GM12878 (cell line): ENCODE measurements at regions of chr5 and their contacts with region 1.

Region 1: GRCh38 chr5:119267958-119268386 is 87.8 kb upstream of the TNFAIP8 start:
- DNase-seq: peak; percentile 81
- ATAC-seq: peak; percentile 81
- H3K4me3 ChIP-seq: peak overlapping the region; percentile 99
- H3K27ac ChIP-seq: peak overlapping the region; percentile 90
- H3K4me1 ChIP-seq: peaks cover 13% of the 10 kb centered on the region
- H3K27me3 ChIP-seq: no peaks in the 10 kb centered on the region
- CTCF ChIP-seq: peak; percentile 63 to 80 (median 68)
- EP300 ChIP-seq: no peak
- POLR2A ChIP-seq: no peak
- RAD21 ChIP-seq: peak; percentile 46; the same call in 1 of the 2 replicates

Region 2: GRCh38 chr5:118529361-118530144 is 738.4 kb before region 1 on chr5:
- CTCF ChIA-PET with region 1: no interaction called
- POLR2A ChIA-PET with region 1: no interaction called
- RAD21 ChIA-PET with region 1: no interaction called
- SMC1A ChIA-PET with region 1: no interaction called
- in situ Hi-C with region 1: no loop called
- intact Hi-C with region 1: no loop called
- DNase-seq: no peak
- ATAC-seq: no peak
- H3K4me3 ChIP-seq: no peak overlapping the region
- H3K27ac ChIP-seq: no peak overlapping the region
- H3K4me1 ChIP-seq: no peaks in the 10 kb centered on the region
- H3K27me3 ChIP-seq: no peaks in the 10 kb centered on the region
- CTCF ChIP-seq: no peak
- EP300 ChIP-seq: no peak
- POLR2A ChIP-seq: no peak
- RAD21 ChIP-seq: no peak

Region 3: DNA sequence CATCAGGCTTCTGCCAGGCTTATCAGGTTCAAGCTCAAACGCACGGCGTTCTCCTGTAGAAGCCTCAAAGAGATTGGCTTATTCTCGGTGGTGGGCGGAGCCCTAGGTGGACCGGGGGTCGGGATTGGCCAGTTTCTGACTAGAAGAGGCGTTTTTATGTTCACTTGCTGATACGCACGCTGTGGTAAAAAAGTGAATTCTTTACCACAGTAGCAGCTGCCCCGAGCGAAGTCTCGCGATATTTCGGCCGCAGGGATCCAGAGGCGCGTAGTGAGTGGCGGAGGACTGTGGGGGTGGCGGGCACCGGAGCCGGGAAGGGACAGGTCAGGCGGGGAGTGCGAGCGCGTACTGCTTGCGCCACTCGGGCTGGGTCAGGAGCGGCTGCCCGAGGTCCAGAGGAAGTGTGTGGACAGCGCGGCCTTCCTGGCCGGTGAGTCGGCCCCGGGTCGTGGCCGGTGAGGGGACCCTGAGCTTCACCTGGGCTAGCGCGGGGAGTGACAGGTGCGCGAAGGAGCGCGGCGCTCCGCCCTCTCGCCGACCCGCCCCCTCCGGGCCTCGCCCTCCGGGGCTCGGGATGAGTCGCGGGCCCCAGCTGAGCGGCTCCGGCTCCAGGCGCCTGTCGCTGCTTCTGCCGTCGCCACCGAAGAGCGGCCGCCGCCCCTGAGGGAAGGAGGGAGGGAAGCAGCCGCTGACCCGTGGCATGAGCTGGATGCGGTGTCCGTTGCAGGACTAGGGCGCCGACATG is 197.0 kb before region 1 on chr5 and contains the start of gene DMXL1:
- CTCF ChIA-PET with region 1: interaction called, 3 read pairs
- POLR2A ChIA-PET with region 1: interaction called, 8 read pairs
- RAD21 ChIA-PET with region 1: interaction called, 4 read pairs
- SMC1A ChIA-PET with region 1: interaction called, 5 read pairs
- in situ Hi-C with region 1: no loop called
- intact Hi-C with region 1: loop called (anchors 2 kb)
- DNase-seq: peak; percentile 99
- ATAC-seq: peak; percentile 84
- H3K4me3 ChIP-seq: peak within 1 kb of the TSS; percentile 79
- H3K27ac ChIP-seq: peak within 1 kb of the TSS; percentile 91
- H3K4me1 ChIP-seq: peaks cover 5% of the 10 kb centered on the region
- H3K27me3 ChIP-seq: no peaks in the 10 kb centered on the region
- CTCF ChIP-seq: no peak
- EP300 ChIP-seq: 0 out of 4 replicates have a peak, but pooled peaks of 1 of the 2 experiments have one; percentile 8
- POLR2A ChIP-seq: peak; percentile 91
- RAD21 ChIP-seq: no peak
- polyA plus RNA-seq, gene DMXL1: 9.1 to 11.0 TPM

Region 4: GRCh38 chr5:119255571-119256356 is 12.2 kb before region 1 on chr5:
- CTCF ChIA-PET with region 1: interaction called, 9 read pairs
- POLR2A ChIA-PET with region 1: no interaction called
- RAD21 ChIA-PET with region 1: interaction called, 17 read pairs
- SMC1A ChIA-PET with region 1: interaction called, 6 read pairs
- in situ Hi-C with region 1: no loop called
- intact Hi-C with region 1: no loop called
- DNase-seq: no peak
- ATAC-seq: peak; percentile 84
- H3K4me3 ChIP-seq: no peak overlapping the region
- H3K27ac ChIP-seq: no peak overlapping the region
- H3K4me1 ChIP-seq: no peaks in the 10 kb centered on the region
- H3K27me3 ChIP-seq: no peaks in the 10 kb centered on the region
- CTCF ChIP-seq: peak in 2 of 3 experiments; percentile 30 to 31; a peak in 3 of 6 replicates
- EP300 ChIP-seq: no peak
- POLR2A ChIP-seq: no peak
- RAD21 ChIP-seq: peak; percentile 49

Region 5: DNA sequence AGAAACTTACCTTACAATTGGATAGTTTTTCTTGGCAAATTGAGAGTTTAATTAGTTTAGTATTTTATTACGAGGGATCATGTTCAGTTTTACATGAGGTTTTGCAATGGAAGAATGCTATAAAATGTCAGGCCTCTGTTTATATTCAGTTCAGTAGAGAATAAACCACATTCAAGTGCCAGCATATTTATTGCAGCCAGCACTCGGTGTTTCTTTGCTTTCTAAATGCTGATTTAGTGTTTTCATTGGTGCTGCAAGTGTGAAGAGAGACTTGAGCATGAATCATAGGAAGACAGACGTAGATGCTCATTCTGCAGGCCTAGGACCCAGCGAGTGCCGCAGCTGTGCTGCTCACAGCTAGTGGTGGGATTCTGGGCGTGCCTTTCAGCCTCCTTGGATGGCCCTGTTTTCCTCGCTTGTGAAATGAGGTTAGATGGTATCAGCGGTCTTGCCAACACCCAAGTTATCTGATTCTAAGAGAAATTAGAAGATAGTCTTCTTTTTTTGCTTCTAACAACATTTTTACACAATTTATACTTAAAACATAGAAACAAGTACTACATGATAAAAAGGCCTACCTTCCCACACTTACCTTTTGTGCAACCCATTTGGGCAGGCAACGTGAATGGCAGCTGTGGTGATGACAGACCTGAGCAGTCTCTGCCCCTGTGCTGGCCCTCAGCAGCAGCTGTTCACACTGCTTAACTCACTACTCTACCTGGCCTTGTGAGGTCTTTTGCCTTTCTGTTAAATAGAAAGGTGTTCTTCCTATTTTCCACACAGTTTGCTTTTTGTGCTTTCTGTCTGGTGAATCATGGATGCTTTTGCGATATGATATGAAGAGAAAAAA is 61.0 kb after region 1 on chr5:
- CTCF ChIA-PET with region 1: interaction called, 10 read pairs
- POLR2A ChIA-PET with region 1: interaction called, 59 read pairs
- RAD21 ChIA-PET with region 1: interaction called, 14 read pairs
- SMC1A ChIA-PET with region 1: interaction called, 175 read pairs
- in situ Hi-C with region 1: no loop called
- intact Hi-C with region 1: no loop called
- DNase-seq: no peak
- ATAC-seq: no peak
- H3K4me3 ChIP-seq: no peak overlapping the region
- H3K27ac ChIP-seq: peak overlapping the region; percentile 7; the same call in 1 of the 2 replicates
- H3K4me1 ChIP-seq: peaks cover 48% of the 10 kb centered on the region
- H3K27me3 ChIP-seq: no peaks in the 10 kb centered on the region
- CTCF ChIP-seq: no peak
- EP300 ChIP-seq: no peak
- POLR2A ChIP-seq: no peak
- RAD21 ChIP-seq: no peak

Region 6: DNA sequence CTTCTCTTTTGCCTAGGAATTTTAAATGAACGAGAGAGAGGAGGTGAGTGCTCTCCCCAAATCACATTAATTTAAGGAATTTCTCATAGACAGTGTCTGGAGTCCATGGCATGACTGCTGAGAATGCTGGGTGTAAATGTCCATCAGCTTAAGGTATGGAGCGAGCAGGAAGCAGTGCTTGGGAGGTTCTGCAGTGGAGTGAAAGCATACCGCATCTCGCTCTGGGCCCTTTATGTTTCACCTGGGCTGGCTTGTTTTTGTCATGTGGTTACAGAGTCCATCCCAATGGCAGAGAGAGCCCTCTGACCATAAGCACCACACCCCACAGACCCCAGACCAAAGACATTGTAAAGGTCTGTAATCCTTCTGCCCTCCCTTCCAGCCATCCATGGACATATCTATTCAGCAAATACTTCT is 67.3 kb after region 1 on chr5:
- CTCF ChIA-PET with region 1: interaction called, 10 read pairs
- POLR2A ChIA-PET with region 1: interaction called, 59 read pairs
- RAD21 ChIA-PET with region 1: interaction called, 27 read pairs
- SMC1A ChIA-PET with region 1: interaction called, 175 read pairs
- in situ Hi-C with region 1: no loop called
- intact Hi-C with region 1: loop called (anchors 2 kb)
- DNase-seq: no peak
- ATAC-seq: peak; percentile 12
- H3K4me3 ChIP-seq: peak overlapping the region; percentile 78
- H3K27ac ChIP-seq: peak overlapping the region; percentile 100
- H3K4me1 ChIP-seq: peaks cover 64% of the 10 kb centered on the region
- H3K27me3 ChIP-seq: no peaks in the 10 kb centered on the region
- CTCF ChIP-seq: no peak
- EP300 ChIP-seq: no peak
- POLR2A ChIP-seq: peak; percentile 46
- RAD21 ChIP-seq: no peak

Region 7: GRCh38 chr5:119583684-119584083 is 315.7 kb after region 1 on chr5:
- CTCF ChIA-PET with region 1: no interaction called
- POLR2A ChIA-PET with region 1: no interaction called
- RAD21 ChIA-PET with region 1: no interaction called
- SMC1A ChIA-PET with region 1: no interaction called
- in situ Hi-C with region 1: no loop called
- intact Hi-C with region 1: no loop called
- DNase-seq: peak; percentile 38
- ATAC-seq: peak; percentile 65
- H3K4me3 ChIP-seq: no peak overlapping the region
- H3K27ac ChIP-seq: no peak overlapping the region
- H3K4me1 ChIP-seq: no peaks in the 10 kb centered on the region
- H3K27me3 ChIP-seq: no peaks in the 10 kb centered on the region
- CTCF ChIP-seq: no peak
- EP300 ChIP-seq: no peak
- POLR2A ChIP-seq: no peak
- RAD21 ChIP-seq: no peak

Region 8: DNA sequence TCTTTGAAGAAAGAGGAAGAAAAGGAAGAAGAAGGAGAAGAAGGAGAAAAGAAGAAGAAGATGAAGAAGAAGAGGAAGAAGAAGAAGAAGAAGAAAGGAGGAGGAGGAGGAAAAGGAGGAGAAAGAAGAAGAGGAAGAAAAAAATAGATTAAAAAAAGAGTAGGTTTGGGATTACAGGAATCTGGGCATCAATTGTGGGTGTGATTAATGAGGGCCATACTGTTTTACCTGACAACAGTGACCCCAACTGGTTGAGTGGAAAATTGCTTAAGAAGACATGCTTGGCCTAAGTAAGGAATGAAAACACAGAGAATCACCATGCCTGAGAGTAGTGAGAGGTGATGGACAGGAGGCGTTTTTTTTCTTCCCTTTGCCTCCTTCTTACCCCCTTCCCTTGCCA is 476.0 kb after region 1 on chr5:
- CTCF ChIA-PET with region 1: no interaction called
- POLR2A ChIA-PET with region 1: no interaction called
- RAD21 ChIA-PET with region 1: no interaction called
- SMC1A ChIA-PET with region 1: no interaction called
- in situ Hi-C with region 1: no loop called
- intact Hi-C with region 1: loop called (anchors 10 kb)
- DNase-seq: peak; percentile 48
- ATAC-seq: peak; percentile 93
- H3K4me3 ChIP-seq: no peak overlapping the region
- H3K27ac ChIP-seq: no peak overlapping the region
- H3K4me1 ChIP-seq: no peaks in the 10 kb centered on the region
- H3K27me3 ChIP-seq: no peaks in the 10 kb centered on the region; a peak in 1 of 4 replicates
- CTCF ChIP-seq: peak; percentile 62 to 73 (median 73); a peak in 5 of 6 replicates
- EP300 ChIP-seq: no peak
- POLR2A ChIP-seq: no peak
- RAD21 ChIP-seq: peak; percentile 76